GM10248 (cell line): ENCODE measurements at regions of chr11 and their contacts with region 1.

Region 1: DNA sequence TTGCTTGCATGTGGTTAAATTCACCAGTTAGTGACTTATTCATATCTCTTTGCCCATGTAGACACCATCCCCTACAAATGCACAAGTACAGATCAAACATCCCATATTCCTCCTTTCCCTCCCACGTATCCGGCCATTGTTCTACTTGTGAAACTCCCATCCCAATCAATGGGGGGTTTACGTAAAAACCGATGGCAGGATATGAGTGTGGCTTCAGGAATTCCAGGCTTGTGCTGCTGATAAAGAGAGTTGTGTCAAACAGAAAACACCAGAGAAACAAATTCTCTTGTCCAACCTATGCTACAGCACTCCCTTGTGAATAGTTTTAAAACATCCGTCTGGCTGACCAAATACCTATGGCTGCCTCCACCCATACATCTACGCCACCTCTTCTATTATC is 15.5 kb downstream of the FLI1 start:
- DNase-seq: no peak
- CTCF ChIP-seq: no peak

Region 2: GRCh38 chr11:128695539-128696221 is 13.7 kb before region 1 on chr11:
- CTCF ChIA-PET with region 1: interaction called, 10 read pairs
- POLR2A ChIA-PET with region 1: interaction called, 4 read pairs
- DNase-seq: no peak
- CTCF ChIP-seq: no peak

Region 3: GRCh38 chr11:128733440-128734102 is 24.2 kb after region 1 on chr11:
- CTCF ChIA-PET with region 1: interaction called, 24 read pairs
- POLR2A ChIA-PET with region 1: no interaction called
- DNase-seq: no peak
- CTCF ChIP-seq: no peak

Region 4: DNA sequence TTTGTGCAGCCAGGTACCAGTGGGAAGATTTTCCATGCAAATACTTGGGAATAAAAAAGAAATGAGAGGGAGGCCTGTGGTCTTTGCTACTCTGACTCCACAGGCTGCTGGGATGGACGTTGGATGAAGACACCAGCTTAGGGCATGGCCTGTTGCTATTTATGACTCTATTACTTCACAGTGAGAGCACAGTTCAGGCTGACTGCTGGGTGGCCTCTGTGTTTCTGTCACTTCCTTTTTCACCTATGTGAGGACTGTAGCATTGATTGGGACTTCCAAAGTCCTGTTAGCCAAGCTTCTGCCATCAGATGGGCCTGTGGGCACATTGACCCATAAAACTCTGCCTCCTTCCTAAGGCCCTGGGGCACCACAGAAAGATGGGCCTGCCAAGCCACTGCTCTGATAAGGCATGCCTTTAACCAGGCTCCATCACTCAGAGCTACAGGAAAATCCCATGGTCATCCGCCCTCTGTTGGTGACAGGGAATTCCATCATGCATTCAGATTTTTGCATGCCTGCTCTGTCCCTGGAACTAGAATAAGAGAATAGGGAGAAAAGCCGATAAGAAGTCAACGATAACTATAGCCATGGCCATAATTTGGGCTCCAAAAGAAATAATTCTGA is 93.1 kb after region 1 on chr11:
- CTCF ChIA-PET with region 1: no interaction called
- POLR2A ChIA-PET with region 1: no interaction called
- DNase-seq: no peak
- CTCF ChIP-seq: peak; percentile 20